Heart right ventricle (tissue), 16 donors: ENCODE measurements at regions of chr12 and their contacts with region 1.

Region 1: GRCh38 chr12:68565375-68565903 is 45.3 kb upstream of the RAP1B start:
- DNase-seq: no peak
- ATAC-seq: no peak
- H3K4me3 ChIP-seq: no peak overlapping the region
- H3K27ac ChIP-seq: no peak overlapping the region
- H3K4me1 ChIP-seq: peaks cover 0 to 17% (median 4%) of the 10 kb centered on the region in 9 donors
- H3K27me3 ChIP-seq: no peaks in the 10 kb centered on the region
- CTCF ChIP-seq: no peak

Region 2: GRCh38 chr12:68497702-68498101 is 67.7 kb before region 1 on chr12:
- intact Hi-C with region 1: loop called in 1 of 10 experiments (anchors 10 kb)
- DNase-seq: no peak
- ATAC-seq: no peak
- H3K4me3 ChIP-seq: no peak overlapping the region
- H3K27ac ChIP-seq: no peak overlapping the region
- H3K4me1 ChIP-seq: peaks cover 0 to 21% (median 13%) of the 10 kb centered on the region in 9 donors
- H3K27me3 ChIP-seq: no peaks in the 10 kb centered on the region
- CTCF ChIP-seq: no peak